Heart left ventricle (tissue), 16 donors: ENCODE measurements at regions of chr14 and their contacts with region 1.

Region 1: GRCh38 chr14:51283402-51284085 is 43.5 kb downstream of the TMX1 start:
- DNase-seq: no peak
- ATAC-seq: peak; percentile 66 to 87 (median 85)
- H3K4me3 ChIP-seq: no peak overlapping the region
- H3K27ac ChIP-seq: no peak overlapping the region
- H3K4me1 ChIP-seq: peaks cover 0 to 4% (median 0%) of the 10 kb centered on the region in 12 donors
- H3K27me3 ChIP-seq: no peaks in the 10 kb centered on the region
- CTCF ChIP-seq: peak; percentile 58 to 91 (median 83)
- POLR2A ChIP-seq: no peak

Region 2: GRCh38 chr14:51342241-51342691 is 58.7 kb after region 1 on chr14:
- intact Hi-C with region 1: no loop called
- DNase-seq: no peak
- ATAC-seq: no peak
- H3K4me3 ChIP-seq: no peak overlapping the region
- H3K27ac ChIP-seq: no peak overlapping the region
- H3K4me1 ChIP-seq: no peaks in the 10 kb centered on the region
- H3K27me3 ChIP-seq: no peaks in the 10 kb centered on the region
- CTCF ChIP-seq: no peak
- POLR2A ChIP-seq: no peak

Region 3: DNA sequence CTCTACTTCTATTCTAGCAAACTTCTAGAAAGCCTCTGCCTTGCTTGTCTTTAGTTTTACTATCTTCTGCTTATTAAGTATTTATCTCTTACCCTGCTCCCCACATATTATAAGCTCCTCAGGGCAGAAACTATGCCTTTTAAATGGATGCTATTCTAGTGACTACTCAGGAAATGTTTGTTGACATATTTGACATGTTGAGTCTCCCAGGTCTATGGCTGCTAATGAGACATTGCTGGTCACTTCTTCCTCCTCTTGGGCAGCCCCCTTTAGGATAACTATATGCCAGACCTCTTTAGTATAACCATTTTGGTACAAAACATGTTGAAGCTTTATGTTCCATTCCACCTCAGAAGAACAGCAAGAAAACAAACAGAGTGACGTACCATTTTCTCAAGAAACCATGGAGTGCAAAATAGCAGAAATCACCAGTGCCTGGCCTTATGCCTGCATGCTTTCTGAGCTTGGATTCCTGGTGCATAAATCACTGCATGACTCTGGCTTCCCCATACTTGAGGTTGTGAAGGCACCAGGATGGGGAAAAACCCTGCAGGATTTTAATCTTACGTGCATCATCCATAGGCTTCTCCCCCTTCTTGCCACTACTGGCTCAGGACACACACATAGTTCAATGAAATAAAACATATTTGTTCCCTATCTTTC is 159.1 kb after region 1 on chr14:
- intact Hi-C with region 1: loop called in 1 of 10 experiments (anchors 5 kb)
- DNase-seq: no peak
- ATAC-seq: peak in 1 of 4 donors; percentile 34
- H3K4me3 ChIP-seq: no peak overlapping the region
- H3K27ac ChIP-seq: no peak overlapping the region
- H3K4me1 ChIP-seq: peaks cover 0 to 6% (median 0%) of the 10 kb centered on the region in 12 donors
- H3K27me3 ChIP-seq: no peaks in the 10 kb centered on the region
- CTCF ChIP-seq: no peak
- POLR2A ChIP-seq: no peak

Region 4: GRCh38 chr14:51651388-51652167 is 368.0 kb after region 1 on chr14 and contains the start of gene FRMD6:
- intact Hi-C with region 1: loop called in 9 of 10 experiments (anchors 2 to 10 kb)
- DNase-seq: peak; percentile 90 to 94 (median 93)
- ATAC-seq: peak; percentile 88 to 95 (median 92)
- H3K4me3 ChIP-seq: peak within 1 kb of the TSS; percentile 60 to 96 (median 88)
- H3K27ac ChIP-seq: peak within 1 kb of the TSS; percentile 89 to 100 (median 97)
- H3K4me1 ChIP-seq: peaks cover 0 to 36% (median 12%) of the 10 kb centered on the region in 12 donors
- H3K27me3 ChIP-seq: peaks cover 0 to 6% (median 0%) of the 10 kb centered on the region in 9 donors
- CTCF ChIP-seq: peak; percentile 63 to 90 (median 76)
- POLR2A ChIP-seq: peak in 1 of 2 donors; percentile 85
- total RNA-seq, gene FRMD6: 4.0 to 23.2 (median 9.2) TPM

Region 5: GRCh38 chr14:51979088-51979709 is 695.7 kb after region 1 on chr14:
- intact Hi-C with region 1: loop called in 9 of 10 experiments (anchors 5 to 10 kb)
- DNase-seq: peak; percentile 74 to 86 (median 82)
- ATAC-seq: peak; percentile 60 to 83 (median 80)
- H3K4me3 ChIP-seq: no peak overlapping the region
- H3K27ac ChIP-seq: peak overlapping the region in 6 of 12 donors; percentile 5 to 46 (median 22)
- H3K4me1 ChIP-seq: peaks cover 0 to 15% (median 0%) of the 10 kb centered on the region in 12 donors
- H3K27me3 ChIP-seq: no peaks in the 10 kb centered on the region
- CTCF ChIP-seq: peak; percentile 85 to 98 (median 94)
- POLR2A ChIP-seq: no peak

Region 6: DNA sequence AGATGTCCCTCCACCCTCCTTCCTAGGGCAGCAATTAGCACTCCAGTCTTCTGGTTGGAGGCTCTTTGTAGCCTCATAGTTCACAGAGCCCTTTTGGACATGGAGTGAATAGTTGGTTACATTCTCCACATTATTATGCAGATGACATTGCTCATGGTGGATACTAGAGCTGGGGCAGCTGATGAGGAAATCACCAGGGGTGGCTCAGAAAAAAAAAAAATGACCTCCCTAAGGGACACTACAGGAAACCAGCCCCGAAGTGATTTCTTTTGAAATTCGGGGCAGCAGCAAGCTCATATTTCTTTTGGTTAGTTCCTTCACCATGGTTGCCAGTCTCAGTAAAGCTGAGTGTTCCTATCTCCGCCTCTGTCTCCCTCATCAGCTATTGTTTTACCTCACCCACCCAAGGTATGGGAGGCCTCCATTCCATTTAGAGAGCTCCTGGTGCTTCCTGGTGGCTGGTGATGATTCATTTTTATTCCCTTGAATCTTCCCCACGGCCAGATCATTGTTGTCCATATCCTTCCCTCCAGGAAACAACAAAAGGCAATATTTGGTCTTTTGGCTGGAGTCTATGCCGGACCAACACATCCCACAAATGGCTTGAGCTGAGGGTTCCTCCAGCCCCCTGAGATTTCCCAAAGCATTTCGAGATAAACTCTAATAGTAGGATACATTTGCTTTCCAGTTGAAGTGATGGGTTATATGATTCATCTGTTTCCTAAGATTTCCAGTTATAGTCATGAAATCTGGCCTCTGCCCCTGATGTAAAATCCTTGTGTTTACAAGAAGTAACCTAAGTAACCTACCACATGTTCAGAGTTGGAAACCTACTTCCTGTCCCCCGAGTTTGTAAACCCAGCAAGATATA is 841.5 kb after region 1 on chr14:
- intact Hi-C with region 1: loop called in 4 of 10 experiments (anchors 10 kb)
- DNase-seq: peak in 4 of 5 donors; percentile 26 to 40 (median 38)
- ATAC-seq: peak; percentile 26 to 87 (median 79)
- H3K4me3 ChIP-seq: peak overlapping the region in 1 of 12 donors; percentile 15
- H3K27ac ChIP-seq: peak overlapping the region in 10 of 12 donors; percentile 6 to 74 (median 62)
- H3K4me1 ChIP-seq: peaks cover 0 to 28% (median 14%) of the 10 kb centered on the region in 12 donors
- H3K27me3 ChIP-seq: no peaks in the 10 kb centered on the region
- CTCF ChIP-seq: no peak
- POLR2A ChIP-seq: no peak